GM18951 (cell line): ENCODE measurements at regions of chr10 and their contacts with region 1.

Region 1: GRCh38 chr10:115818012-115818411 is 455.0 kb downstream of the GFRA1 start:
- POLR2A ChIP-seq: no peak

Region 2: GRCh38 chr10:116385994-116386809 is 568.2 kb after region 1 on chr10:
- in situ Hi-C with region 1: loop called (anchors 25 kb)
- POLR2A ChIP-seq: no peak